ENCODE measurements at regions of chr3 and their contacts with region 1.

Region 1: DNA sequence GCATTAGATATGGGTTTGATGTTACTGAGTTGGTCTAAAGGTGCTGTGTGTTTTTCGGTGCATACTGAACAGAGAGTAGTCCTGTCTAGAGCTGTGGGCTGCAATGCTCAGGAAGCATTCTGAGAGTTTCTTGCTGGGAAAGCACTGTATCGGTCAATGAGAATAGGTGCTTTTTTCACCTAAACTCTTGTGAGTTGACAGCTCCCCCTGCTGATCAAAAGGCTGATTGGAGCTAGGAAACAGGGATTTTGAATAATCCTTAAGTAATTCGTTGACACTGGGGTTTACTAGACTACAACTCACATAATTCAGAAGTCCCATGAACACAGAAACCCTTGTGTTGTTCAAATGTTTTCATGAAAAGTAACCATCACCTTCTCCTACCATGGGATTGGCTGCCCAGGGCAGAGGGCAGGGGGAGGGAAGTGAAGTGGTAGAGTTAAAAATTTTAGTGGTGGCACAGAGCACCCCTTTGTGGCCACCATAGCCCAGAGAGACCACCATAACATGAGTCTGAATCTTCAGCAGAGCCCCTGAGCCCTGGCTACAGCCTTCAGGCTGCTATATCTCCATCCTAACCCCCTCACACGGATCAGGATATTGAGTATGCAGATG is 13.0 kb upstream of the MANF start:
- DNase-seq: peak; percentile 15

Region 2: GRCh38 chr3:50568947-50569749 is 802.9 kb before region 1 on chr3 and contains the start of gene HEMK1:
- intact Hi-C with region 1: loop called (anchors 5 kb)
- DNase-seq: peak; percentile 98
- total RNA-seq, gene HEMK1: 14.4 TPM

Region 3: DNA sequence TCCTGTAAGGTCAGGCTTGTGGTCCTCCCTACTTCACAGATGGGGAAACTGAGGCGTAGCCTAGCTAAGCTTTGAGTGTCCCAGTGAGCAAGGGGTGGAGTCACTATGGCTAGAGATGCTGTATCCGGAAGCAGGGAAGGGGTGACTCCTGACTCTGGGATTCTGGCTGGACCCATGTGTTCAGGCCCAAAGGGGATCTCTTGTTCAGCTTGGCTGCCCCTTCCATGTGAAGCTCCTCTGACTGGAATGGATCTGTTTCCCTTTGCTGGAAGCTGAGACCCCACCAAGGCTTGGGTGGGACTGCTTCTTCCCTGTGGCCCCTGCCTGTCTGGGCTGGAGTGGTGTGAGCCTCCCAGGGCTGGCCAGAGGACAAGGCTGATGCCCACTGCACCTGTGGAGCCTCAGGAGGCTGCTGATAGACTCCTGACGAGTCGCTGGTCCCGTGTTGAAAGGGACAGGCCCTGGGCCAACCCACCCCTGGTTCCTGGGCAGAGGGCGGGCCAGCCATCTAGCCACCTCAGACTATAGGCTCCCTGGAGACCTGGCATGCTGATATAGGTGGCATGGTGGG is 754.1 kb before region 1 on chr3:
- intact Hi-C with region 1: loop called (anchors 2 kb)
- DNase-seq: no peak

Region 4: DNA sequence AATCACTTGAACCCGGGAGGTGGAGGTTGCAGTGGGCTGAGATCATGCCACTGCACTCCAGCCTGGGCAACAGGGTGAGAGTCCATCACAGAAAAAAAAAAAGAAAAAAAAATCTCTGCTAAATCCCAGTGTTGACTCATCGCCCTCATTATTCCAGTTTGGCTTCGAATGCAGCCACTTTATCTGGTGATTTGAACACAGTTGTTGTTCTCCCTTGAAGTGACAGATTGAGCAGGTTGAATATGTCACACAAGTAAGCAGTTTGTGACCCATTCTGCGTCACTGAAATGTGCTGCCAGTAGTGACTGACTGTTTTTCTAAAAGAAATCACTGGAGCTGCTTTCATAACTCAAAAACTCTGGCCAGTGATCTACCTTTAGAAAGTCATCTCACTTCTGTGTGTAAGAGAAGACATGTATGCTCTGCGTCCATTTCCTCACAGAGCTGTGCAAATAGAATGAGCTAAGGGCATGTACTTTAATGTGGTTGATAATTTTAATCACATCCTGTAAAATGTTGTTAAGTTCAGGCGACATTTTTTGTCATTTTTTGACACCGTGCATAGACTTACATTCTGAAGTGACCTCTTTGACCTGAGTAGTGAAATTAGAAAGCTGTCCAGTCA is 684.8 kb before region 1 on chr3:
- intact Hi-C with region 1: loop called (anchors 10 kb)
- DNase-seq: no peak

Region 5: GRCh38 chr3:51099794-51100535 is 272.1 kb before region 1 on chr3:
- intact Hi-C with region 1: loop called (anchors 5 kb)
- DNase-seq: no peak

Region 6: DNA sequence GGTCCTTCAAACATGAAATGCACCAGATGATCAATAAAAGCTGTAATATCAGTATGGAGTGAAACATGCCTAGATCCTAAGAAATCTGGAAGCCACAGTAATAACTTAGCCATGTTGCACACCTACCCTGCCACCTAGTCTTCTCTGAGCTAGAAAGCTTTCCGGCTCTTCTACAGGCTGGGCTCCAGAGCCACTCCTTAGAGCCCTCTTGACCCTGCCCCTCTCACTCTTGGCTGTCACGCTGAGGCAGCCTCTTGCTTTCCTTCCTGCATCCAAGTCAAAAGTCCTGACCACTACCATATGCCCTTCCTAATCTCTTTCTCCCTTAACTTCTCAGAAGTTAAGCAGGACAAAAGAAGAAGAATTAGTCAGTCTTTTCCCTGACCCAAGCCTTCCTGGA is 36.8 kb after region 1 on chr3:
- intact Hi-C with region 1: no loop called
- DNase-seq: no peak

Region 7: GRCh38 chr3:51422211-51422610 is 50.2 kb after region 1 on chr3:
- intact Hi-C with region 1: no loop called
- DNase-seq: no peak

Region 8: DNA sequence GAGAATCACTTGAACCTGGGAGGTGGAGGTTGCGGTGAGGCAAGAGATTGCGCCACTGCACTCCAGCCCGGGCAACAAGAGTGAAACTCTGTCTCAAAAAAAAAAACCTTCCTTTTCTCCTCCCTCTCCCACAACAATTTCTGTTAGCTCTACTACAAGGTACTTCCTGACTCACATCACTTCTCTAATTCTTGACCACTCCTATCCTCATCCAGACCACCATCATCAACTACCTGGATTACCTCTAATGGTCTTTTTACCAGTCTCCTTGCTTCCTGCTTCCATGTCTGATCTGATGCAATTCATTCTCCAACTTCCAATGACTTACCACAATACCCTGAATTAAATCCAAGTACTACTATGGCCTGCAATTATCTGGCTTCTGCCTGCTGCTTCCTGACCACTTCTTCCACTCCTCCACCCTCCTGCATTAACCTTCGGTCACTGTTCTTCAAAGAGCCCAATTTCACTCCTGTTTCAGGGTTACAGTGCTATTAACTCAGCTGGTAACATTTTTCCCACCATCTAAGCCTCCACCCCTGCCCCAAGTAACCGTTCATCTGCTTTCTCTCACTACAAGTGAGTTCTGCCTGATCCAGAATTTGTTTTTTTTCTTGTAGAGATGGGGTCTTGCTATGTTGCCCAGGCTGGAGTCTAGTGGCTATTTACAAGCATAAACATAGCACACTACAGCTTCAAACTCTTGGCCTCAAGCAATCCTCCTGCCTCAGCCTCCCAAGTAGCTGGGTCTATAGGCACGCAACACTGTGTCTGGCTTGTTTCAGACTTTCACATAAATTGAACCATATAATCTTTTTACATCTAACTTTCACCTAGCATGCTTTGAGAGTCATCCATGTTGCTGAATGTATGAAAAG is 100.0 kb after region 1 on chr3:
- intact Hi-C with region 1: no loop called
- DNase-seq: no peak

Measured in cardiac septum (tissue), 1 donor.